Cardiac septum (tissue), 1 donor: ENCODE measurements at regions of chr15 and their contacts with region 1.

Region 1: GRCh38 chr15:85010386-85011159 is 28.9 kb downstream of the PDE8A start:
- DNase-seq: no peak

Region 2: GRCh38 chr15:84863565-84864443 is 146.8 kb before region 1 on chr15:
- intact Hi-C with region 1: loop called (anchors 10 kb)
- DNase-seq: no peak

Region 3: GRCh38 chr15:84894442-84895361 is 115.9 kb before region 1 on chr15:
- intact Hi-C with region 1: no loop called
- DNase-seq: no peak

Region 4: DNA sequence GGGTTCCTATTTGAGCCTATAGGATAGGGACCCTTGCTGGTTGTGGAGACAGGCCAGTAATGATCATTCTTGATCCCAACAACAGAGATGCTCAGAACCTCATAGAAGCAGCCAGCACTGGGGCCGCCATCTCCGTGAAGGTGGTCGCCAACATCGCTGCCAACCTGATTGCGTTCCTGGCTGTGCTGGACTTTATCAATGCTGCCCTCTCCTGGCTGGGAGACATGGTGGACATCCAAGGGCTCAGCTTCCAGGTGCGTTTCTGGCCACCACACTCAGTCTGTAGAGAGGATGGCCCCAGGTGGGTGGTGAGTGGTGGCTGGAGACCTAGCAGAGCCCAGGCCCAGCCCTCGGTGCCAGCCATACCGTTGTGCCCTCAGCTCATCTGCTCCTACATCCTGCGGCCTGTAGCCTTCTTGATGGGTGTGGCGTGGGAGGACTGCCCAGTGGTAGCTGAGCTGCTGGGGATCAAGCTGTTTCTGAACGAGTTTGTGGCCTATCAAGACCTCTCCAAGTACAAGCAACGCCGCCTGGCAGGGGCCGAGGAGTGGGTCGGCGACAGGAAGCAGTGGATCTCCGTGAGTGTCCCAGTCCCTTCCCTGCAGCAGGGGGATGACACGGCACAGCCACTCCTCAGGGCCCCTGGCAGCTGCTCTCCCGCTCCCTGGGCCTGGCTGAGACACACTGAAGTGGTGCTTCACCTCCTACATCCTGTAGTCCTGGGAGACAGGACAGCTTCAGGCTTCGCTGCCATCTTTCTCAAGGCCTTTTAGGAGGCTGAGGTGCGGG is 75.4 kb before region 1 on chr15:
- intact Hi-C with region 1: no loop called
- DNase-seq: no peak

Region 5: GRCh38 chr15:85073556-85074194 is 63.1 kb after region 1 on chr15:
- intact Hi-C with region 1: no loop called
- DNase-seq: no peak